ENCODE measurements at regions of chr1 and their contacts with region 1.

Region 1: GRCh38 chr1:42766741-42767509 is at the starts of genes C1orf50 and P3H1:
- DNase-seq: peak; percentile 97
- H3K4me3 ChIP-seq: peak within 1 kb of the TSS; percentile 95
- H3K27ac ChIP-seq: peak within 1 kb of the TSS; percentile 87
- H3K27me3 ChIP-seq: no peaks in the 10 kb centered on the region
- CTCF ChIP-seq: no peak
- polyA plus RNA-seq, gene C1orf50: 5.4 and 6.4 TPM in 2 replicates
- polyA plus RNA-seq, gene P3H1: 156 and 188 TPM in 2 replicates

Region 2: GRCh38 chr1:42420911-42421585 is 345.9 kb before region 1 on chr1:
- CTCF ChIA-PET with region 1: no interaction called
- POLR2A ChIA-PET with region 1: no interaction called
- DNase-seq: peak; percentile 42
- H3K4me3 ChIP-seq: no peak overlapping the region
- H3K27ac ChIP-seq: peak overlapping the region; percentile 3
- H3K27me3 ChIP-seq: peaks cover 23% of the 10 kb centered on the region
- CTCF ChIP-seq: no peak

Region 3: DNA sequence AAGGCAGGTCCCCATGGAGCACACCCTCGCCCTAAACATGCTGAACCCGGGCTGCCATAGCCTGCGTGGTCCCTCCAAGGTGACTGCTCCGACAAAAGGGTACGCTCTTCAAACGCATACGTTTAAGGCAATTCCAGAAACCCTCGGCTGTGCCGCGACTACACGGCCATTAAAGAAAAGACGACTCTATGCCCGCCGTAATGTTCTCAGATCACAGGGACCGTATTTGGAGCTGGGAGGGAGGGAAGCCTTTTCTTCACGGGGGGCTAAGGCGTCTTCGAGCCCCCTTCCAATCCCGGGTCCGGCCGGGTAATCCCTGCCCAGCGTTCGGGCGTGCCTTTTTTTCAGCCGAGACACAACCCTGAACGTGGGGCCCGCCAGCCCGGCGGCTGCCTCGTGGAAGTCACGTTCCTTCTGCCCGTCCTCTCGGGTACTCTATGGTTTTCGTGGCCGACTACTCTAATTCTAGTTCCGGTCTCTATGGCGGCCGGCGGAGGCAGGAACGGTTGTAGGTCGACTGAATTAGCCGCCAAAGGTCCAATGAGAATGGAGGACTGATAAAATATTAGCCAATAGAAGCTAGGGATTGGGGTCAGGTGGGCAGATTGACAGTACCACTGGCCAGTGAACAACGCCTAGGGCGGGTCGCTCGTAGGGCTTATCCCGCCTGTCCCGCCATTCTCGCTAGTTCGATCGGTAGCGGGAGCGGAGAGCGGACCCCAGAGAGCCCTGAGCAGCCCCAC is 85.0 kb before region 1 on chr1 and contains the start of gene YBX1:
- CTCF ChIA-PET with region 1: interaction called, 11 read pairs
- POLR2A ChIA-PET with region 1: interaction called, 32 read pairs
- DNase-seq: peak; percentile 97
- H3K4me3 ChIP-seq: peak within 1 kb of the TSS; percentile 88
- H3K27ac ChIP-seq: peak within 1 kb of the TSS; percentile 93
- H3K27me3 ChIP-seq: no peaks in the 10 kb centered on the region
- CTCF ChIP-seq: no peak
- polyA plus RNA-seq, gene YBX1: 599 and 636 TPM in 2 replicates

Region 4: GRCh38 chr1:42777852-42778251 is 10.9 kb after region 1 on chr1:
- CTCF ChIA-PET with region 1: interaction called, 10 read pairs
- POLR2A ChIA-PET with region 1: interaction called, 6 read pairs
- DNase-seq: no peak
- H3K4me3 ChIP-seq: no peak overlapping the region
- H3K27ac ChIP-seq: no peak overlapping the region
- H3K27me3 ChIP-seq: no peaks in the 10 kb centered on the region
- CTCF ChIP-seq: peak; percentile 69

Region 5: DNA sequence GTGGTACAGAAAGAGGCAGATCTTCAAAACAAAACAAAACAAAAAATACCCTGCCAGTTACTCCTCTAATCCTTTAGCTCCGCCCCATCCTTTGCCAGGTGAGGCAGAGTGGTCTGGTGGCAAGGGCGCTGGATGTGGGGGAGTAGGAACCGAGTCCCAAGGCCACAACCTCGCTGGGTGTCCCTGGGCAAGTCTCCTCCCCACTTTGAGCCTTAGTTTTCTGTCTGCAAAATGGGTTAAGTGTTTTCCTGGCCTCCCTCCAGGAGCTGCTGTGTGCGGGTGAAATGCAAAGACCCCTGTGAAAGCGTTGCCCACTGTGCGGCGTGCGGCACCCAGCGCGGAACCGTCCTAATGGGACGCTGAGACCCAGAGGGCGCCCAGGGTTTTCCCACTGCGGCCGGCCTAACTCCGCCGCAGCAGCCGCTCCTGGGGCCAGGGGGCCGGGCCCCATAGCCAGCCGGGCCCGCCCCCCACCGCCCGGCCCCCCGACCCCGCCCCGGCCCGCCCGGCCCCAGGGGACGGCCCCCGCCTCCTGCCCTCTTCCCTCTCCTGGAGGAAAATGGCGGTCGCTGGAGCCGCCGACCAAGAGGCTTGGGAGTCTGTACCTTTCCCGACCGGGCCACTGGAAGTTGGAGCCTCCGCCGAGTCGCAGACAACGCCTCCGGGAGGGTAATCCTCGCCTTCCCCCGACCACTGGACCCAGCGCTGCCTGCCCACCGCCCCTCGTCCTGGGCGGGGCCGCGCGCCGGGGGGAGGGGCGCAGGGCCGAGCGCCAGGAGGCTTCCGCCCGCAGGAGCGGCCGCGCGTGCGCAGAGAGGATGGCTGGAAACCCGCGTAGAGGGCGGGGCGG is 49.9 kb after region 1 on chr1 and contains the starts of genes ERMAP and SVBP:
- CTCF ChIA-PET with region 1: interaction called, 10 read pairs
- POLR2A ChIA-PET with region 1: interaction called, 6 read pairs
- DNase-seq: peak; percentile 61
- H3K4me3 ChIP-seq: peak within 1 kb of the TSS; percentile 86
- H3K27ac ChIP-seq: peak within 1 kb of the TSS; percentile 97
- H3K27me3 ChIP-seq: no peaks in the 10 kb centered on the region
- CTCF ChIP-seq: no peak
- polyA plus RNA-seq, gene ERMAP: 16.1 and 18.2 TPM in 2 replicates
- polyA plus RNA-seq, gene SVBP: 25.7 and 29.8 TPM in 2 replicates

Region 6: GRCh38 chr1:42876009-42876408 is 109.1 kb after region 1 on chr1:
- CTCF ChIA-PET with region 1: no interaction called
- POLR2A ChIA-PET with region 1: no interaction called
- DNase-seq: no peak
- H3K4me3 ChIP-seq: no peak overlapping the region
- H3K27ac ChIP-seq: no peak overlapping the region
- H3K27me3 ChIP-seq: peaks cover 19% of the 10 kb centered on the region
- CTCF ChIP-seq: no peak

Region 7: DNA sequence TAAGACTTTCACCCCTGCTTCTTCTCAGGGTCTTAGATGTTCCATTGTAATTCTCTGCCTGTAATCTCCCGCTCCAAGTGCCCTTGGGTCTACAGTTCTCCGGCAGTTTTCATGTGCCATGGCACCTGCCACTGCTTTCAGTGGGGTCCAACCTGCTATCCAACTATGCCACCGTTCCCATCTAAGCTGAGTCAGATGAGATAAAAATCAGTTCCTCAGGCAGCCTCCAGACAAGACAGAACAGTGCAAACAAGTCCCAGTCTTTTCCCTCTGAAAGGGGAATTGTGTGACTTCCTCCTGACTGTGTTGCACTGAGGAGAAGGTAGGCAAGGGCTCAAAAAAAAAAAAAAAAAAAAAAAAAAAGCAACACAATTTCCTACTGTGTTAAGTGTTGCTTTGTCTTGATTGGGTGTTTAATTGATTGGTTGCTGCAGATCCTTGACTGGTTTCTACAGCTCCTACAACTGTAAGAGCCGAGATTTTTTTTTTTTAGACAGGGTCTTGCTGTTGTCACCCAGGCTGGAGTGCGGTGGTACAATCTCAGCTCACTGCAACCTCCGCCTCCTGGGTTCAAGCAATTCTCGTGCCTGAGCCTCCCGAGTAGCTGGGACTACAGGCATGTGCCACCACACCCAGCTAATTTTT is 354.5 kb after region 1 on chr1:
- CTCF ChIA-PET with region 1: no interaction called
- POLR2A ChIA-PET with region 1: no interaction called
- DNase-seq: no peak
- H3K4me3 ChIP-seq: no peak overlapping the region
- H3K27ac ChIP-seq: no peak overlapping the region
- H3K27me3 ChIP-seq: no peaks in the 10 kb centered on the region
- CTCF ChIP-seq: no peak

Region 8: GRCh38 chr1:44531785-44532566 is 1765.1 kb after region 1 on chr1:
- CTCF ChIA-PET with region 1: no interaction called
- POLR2A ChIA-PET with region 1: no interaction called
- DNase-seq: no peak
- H3K4me3 ChIP-seq: no peak overlapping the region
- H3K27ac ChIP-seq: no peak overlapping the region
- H3K27me3 ChIP-seq: peaks cover 5% of the 10 kb centered on the region
- CTCF ChIP-seq: no peak

Measured in AG04450 (cell line).